Caco-2 (cell line): ENCODE measurements at regions of chr2 and their contacts with region 1.

Region 1: DNA sequence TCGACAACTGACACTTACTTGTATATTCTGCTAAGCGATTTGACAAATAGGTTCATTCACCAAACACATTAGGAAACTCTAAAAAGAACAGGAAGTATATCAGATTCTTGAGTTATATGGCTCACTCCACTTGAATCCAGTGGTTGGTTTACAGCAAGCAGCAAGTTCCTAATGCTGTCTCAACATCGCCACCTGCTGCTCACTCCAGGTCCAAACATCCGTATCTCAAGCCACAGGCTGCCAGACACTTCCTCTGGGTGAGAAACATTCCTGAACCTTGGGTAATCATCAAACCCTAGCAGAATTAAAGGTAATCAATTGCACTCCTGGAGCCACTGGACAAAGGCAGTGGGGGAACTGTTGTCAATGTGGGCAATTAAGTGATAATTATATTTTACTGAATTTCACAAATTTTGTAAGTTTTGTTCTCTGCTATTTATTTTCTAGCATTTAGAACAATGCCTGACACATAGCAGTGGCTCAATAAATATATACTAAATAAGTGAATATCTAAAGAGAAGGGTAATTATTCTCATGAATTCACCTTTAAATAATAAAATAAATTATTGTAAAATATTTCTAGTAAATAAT is 107.1 kb upstream of the TTN start:
- DNase-seq: peak; percentile 83 to 86
- H3K4me3 ChIP-seq: no peak overlapping the region
- H3K4me3 Mint-ChIP-seq: no peak overlapping the region
- H3K27ac Mint-ChIP-seq: no peak overlapping the region
- H3K4me1 ChIP-seq: no peaks in the 10 kb centered on the region
- H3K4me1 Mint-ChIP-seq: no peaks in the 10 kb centered on the region
- H3K27me3 ChIP-seq: no peaks in the 10 kb centered on the region
- H3K27me3 Mint-ChIP-seq: no peaks in the 10 kb centered on the region
- CTCF ChIP-seq: peak; percentile 82 to 86

Region 2: GRCh38 chr2:178084273-178084672 is 830.1 kb before region 1 on chr2:
- CTCF ChIA-PET with region 1: no interaction called
- POLR2A ChIA-PET with region 1: no interaction called
- intact Hi-C with region 1: no loop called
- DNase-seq: no peak
- H3K4me3 ChIP-seq: no peak overlapping the region
- H3K4me3 Mint-ChIP-seq: no peak overlapping the region
- H3K27ac Mint-ChIP-seq: no peak overlapping the region
- H3K4me1 ChIP-seq: no peaks in the 10 kb centered on the region
- H3K4me1 Mint-ChIP-seq: no peaks in the 10 kb centered on the region
- H3K27me3 ChIP-seq: no peaks in the 10 kb centered on the region
- H3K27me3 Mint-ChIP-seq: peaks cover 6% of the 10 kb centered on the region
- CTCF ChIP-seq: no peak

Region 3: GRCh38 chr2:178644933-178645332 is 269.4 kb before region 1 on chr2:
- CTCF ChIA-PET with region 1: no interaction called
- POLR2A ChIA-PET with region 1: no interaction called
- intact Hi-C with region 1: no loop called
- DNase-seq: no peak
- H3K4me3 ChIP-seq: no peak overlapping the region
- H3K4me3 Mint-ChIP-seq: no peak overlapping the region
- H3K27ac Mint-ChIP-seq: no peak overlapping the region
- H3K4me1 ChIP-seq: no peaks in the 10 kb centered on the region
- H3K4me1 Mint-ChIP-seq: no peaks in the 10 kb centered on the region
- H3K27me3 ChIP-seq: no peaks in the 10 kb centered on the region
- H3K27me3 Mint-ChIP-seq: no peaks in the 10 kb centered on the region
- CTCF ChIP-seq: no peak

Region 4: DNA sequence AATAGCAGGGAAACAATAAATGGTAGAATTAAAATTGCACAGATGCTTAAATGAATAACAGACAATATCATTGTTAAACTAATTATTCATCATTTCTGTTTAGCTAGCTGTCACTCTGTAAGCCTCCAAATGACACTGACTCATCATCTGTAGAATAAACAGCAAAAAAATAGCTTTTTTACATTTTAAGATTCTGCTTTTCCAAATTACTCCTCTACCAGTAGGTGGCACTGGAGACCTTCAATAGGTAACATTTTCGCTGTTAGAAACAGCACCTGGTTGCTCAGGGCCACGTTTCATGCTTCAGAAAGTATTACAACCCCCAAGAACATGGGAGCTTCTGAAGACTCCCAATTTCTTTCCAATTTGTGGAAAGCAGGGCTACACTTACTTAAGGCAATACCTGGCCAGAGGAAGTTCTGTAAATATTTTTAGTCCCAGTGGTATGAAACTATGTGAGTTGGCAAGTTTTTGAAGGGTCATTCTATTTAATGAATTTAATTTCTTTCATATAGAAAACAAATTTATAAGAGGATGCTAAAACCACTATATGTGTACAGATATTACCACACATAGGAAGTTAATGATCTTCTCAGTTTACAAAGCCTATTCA is 152.5 kb before region 1 on chr2:
- CTCF ChIA-PET with region 1: interaction called, 3 read pairs
- POLR2A ChIA-PET with region 1: no interaction called
- intact Hi-C with region 1: loop called (anchors 1 kb)
- DNase-seq: peak; percentile 35 to 53
- H3K4me3 ChIP-seq: no peak overlapping the region
- H3K4me3 Mint-ChIP-seq: no peak overlapping the region
- H3K27ac Mint-ChIP-seq: no peak overlapping the region
- H3K4me1 ChIP-seq: no peaks in the 10 kb centered on the region
- H3K4me1 Mint-ChIP-seq: no peaks in the 10 kb centered on the region
- H3K27me3 ChIP-seq: no peaks in the 10 kb centered on the region
- H3K27me3 Mint-ChIP-seq: no peaks in the 10 kb centered on the region
- CTCF ChIP-seq: peak; percentile 74 to 83

Region 5: GRCh38 chr2:178796079-178796677 is 118.2 kb before region 1 on chr2:
- CTCF ChIA-PET with region 1: interaction called, 3 read pairs
- POLR2A ChIA-PET with region 1: no interaction called
- intact Hi-C with region 1: loop called (anchors 1 kb)
- DNase-seq: no peak
- H3K4me3 ChIP-seq: no peak overlapping the region
- H3K4me3 Mint-ChIP-seq: no peak overlapping the region
- H3K27ac Mint-ChIP-seq: no peak overlapping the region
- H3K4me1 ChIP-seq: no peaks in the 10 kb centered on the region
- H3K4me1 Mint-ChIP-seq: no peaks in the 10 kb centered on the region
- H3K27me3 ChIP-seq: no peaks in the 10 kb centered on the region
- H3K27me3 Mint-ChIP-seq: no peaks in the 10 kb centered on the region
- CTCF ChIP-seq: peak; percentile 25 to 56

Region 6: GRCh38 chr2:178891265-178891958 is 22.9 kb before region 1 on chr2:
- CTCF ChIA-PET with region 1: no interaction called
- POLR2A ChIA-PET with region 1: no interaction called
- intact Hi-C with region 1: loop called (anchors 1 kb)
- DNase-seq: peak; percentile 72 to 80
- H3K4me3 ChIP-seq: no peak overlapping the region
- H3K4me3 Mint-ChIP-seq: no peak overlapping the region
- H3K27ac Mint-ChIP-seq: no peak overlapping the region
- H3K4me1 ChIP-seq: no peaks in the 10 kb centered on the region
- H3K4me1 Mint-ChIP-seq: no peaks in the 10 kb centered on the region
- H3K27me3 ChIP-seq: no peaks in the 10 kb centered on the region
- H3K27me3 Mint-ChIP-seq: no peaks in the 10 kb centered on the region
- CTCF ChIP-seq: peak; percentile 89 to 90

Region 7: DNA sequence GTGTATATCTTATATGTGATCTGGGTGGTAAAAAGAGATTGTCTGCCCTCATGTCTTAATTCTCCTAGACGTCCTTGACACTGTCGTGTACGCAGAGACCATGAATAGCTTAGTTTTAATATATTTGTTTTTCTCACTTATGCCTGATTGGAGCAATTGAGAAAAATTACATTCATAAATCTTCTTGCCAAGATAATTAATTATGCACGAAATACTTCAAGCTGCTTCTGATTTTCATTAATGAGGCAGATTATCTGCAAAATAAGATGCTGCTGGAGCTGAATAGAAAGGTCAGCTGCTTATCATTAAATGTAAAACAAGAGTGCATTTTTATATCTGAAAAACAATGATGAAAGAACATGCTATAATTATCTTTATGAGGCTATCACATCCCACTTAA is 39.7 kb after region 1 on chr2:
- CTCF ChIA-PET with region 1: no interaction called
- POLR2A ChIA-PET with region 1: no interaction called
- intact Hi-C with region 1: no loop called
- DNase-seq: no peak
- H3K4me3 ChIP-seq: no peak overlapping the region
- H3K4me3 Mint-ChIP-seq: no peak overlapping the region
- H3K27ac Mint-ChIP-seq: no peak overlapping the region
- H3K4me1 ChIP-seq: no peaks in the 10 kb centered on the region
- H3K4me1 Mint-ChIP-seq: no peaks in the 10 kb centered on the region
- H3K27me3 ChIP-seq: no peaks in the 10 kb centered on the region
- H3K27me3 Mint-ChIP-seq: no peaks in the 10 kb centered on the region
- CTCF ChIP-seq: no peak

Region 8: DNA sequence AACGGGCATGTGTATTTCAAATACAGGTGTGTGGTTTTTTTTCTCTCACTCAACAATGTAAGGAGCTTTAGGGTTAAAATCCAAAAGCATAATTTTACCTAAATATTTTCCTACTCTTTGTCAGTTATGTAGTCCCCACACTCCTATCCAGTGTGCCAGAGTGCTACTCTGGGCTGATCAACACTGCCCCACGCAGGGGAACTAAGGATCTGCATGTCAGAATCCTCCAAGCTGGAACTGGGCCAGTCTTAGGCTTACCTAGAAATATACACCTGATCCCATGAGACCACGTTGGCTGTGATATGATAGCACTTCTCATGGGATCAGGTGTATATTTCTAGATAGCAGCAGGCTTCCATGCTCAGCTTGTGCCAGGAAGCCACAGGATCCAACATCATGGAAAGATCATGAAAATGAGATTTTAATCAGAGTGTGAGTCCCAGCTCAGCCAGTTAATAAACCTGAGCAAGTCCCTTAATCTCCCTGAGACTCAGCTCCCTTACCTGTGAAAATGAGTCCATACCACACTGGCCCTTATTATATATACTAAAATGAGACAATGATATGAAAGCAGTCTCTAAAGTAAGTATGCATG is 105.9 kb after region 1 on chr2:
- CTCF ChIA-PET with region 1: no interaction called
- POLR2A ChIA-PET with region 1: no interaction called
- intact Hi-C with region 1: loop called (anchors 2 kb)
- DNase-seq: peak; percentile 66 to 67
- H3K4me3 ChIP-seq: no peak overlapping the region
- H3K4me3 Mint-ChIP-seq: no peak overlapping the region
- H3K27ac Mint-ChIP-seq: no peak overlapping the region
- H3K4me1 ChIP-seq: no peaks in the 10 kb centered on the region
- H3K4me1 Mint-ChIP-seq: no peaks in the 10 kb centered on the region
- H3K27me3 ChIP-seq: no peaks in the 10 kb centered on the region
- H3K27me3 Mint-ChIP-seq: no peaks in the 10 kb centered on the region
- CTCF ChIP-seq: peak; percentile 61 to 71

Region 9: DNA sequence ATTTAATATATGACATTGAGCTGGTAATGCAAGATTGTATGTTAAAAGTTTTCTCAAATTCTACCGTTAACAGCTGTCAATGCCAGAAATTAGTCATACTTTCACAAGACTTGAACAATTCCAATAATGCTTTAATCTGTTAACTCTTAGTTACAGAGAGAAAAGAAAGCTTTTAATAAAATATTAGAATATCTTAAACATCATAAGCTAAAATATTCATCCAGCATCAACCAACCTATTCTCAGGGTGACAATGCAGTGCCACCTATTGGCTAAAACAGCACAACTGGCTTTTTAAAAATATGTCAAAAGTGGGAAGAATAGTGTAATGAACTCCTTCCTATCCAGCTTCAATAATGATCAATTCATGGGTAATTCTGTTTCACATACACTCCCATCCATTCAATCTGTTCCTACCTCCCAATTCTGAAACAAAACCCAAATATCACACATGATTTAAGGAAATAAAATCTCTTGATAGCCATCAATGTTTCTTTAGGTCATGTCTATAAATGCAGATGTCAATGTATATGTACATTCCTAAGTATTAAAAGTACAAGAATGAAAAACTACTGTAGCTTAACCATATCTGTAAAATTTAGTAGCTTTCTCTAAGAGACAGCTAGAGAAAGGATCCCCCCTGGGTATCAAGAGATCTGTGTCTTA is 215.4 kb after region 1 on chr2:
- CTCF ChIA-PET with region 1: no interaction called
- POLR2A ChIA-PET with region 1: no interaction called
- intact Hi-C with region 1: loop called (anchors 2 kb)
- DNase-seq: peak in 1 of 2 experiments; percentile 20
- H3K4me3 ChIP-seq: no peak overlapping the region
- H3K4me3 Mint-ChIP-seq: no peak overlapping the region
- H3K27ac Mint-ChIP-seq: no peak overlapping the region
- H3K4me1 ChIP-seq: no peaks in the 10 kb centered on the region
- H3K4me1 Mint-ChIP-seq: no peaks in the 10 kb centered on the region
- H3K27me3 ChIP-seq: no peaks in the 10 kb centered on the region
- H3K27me3 Mint-ChIP-seq: no peaks in the 10 kb centered on the region
- CTCF ChIP-seq: peak; percentile 64 to 83